Activated T-helper 1 cell treated with anti-CD3 and anti-CD28 coated beads, Interleukin-12 subunit alpha, Interleukin-12 subunit beta, Interleukin-2, Interleukin-4 antibody, amounts not matched to agents 30 ng/mL and 10 ng/mL and 1 ng/mL, durations not matched to agents 14 hours and 24 hours and 36 hours (primary cell): ENCODE measurements at regions of chr2 and their contacts with region 1.

Region 1: GRCh38 chr2:220687231-220687843 is 884.8 kb downstream of the EPHA4 start:
- DNase-seq: peak; percentile 30
- H3K4me3 Mint-ChIP-seq: no peak overlapping the region
- H3K27ac Mint-ChIP-seq: no peak overlapping the region
- H3K4me1 Mint-ChIP-seq: no peaks in the 10 kb centered on the region
- H3K27me3 Mint-ChIP-seq: peaks cover 5% of the 10 kb centered on the region

Region 2: GRCh38 chr2:219368690-219369195 is 1318.6 kb before region 1 on chr2:
- intact Hi-C with region 1: no loop called
- DNase-seq: no peak
- H3K4me3 Mint-ChIP-seq: no peak overlapping the region
- H3K27ac Mint-ChIP-seq: no peak overlapping the region
- H3K4me1 Mint-ChIP-seq: no peaks in the 10 kb centered on the region
- H3K27me3 Mint-ChIP-seq: no peaks in the 10 kb centered on the region

Region 3: GRCh38 chr2:220717283-220717682 is 29.9 kb after region 1 on chr2:
- intact Hi-C with region 1: no loop called
- DNase-seq: no peak
- H3K4me3 Mint-ChIP-seq: no peak overlapping the region
- H3K27ac Mint-ChIP-seq: no peak overlapping the region
- H3K4me1 Mint-ChIP-seq: no peaks in the 10 kb centered on the region
- H3K27me3 Mint-ChIP-seq: peaks cover 2% of the 10 kb centered on the region

Region 4: GRCh38 chr2:220959391-220959802 is 272.1 kb after region 1 on chr2:
- intact Hi-C with region 1: no loop called
- DNase-seq: no peak
- H3K4me3 Mint-ChIP-seq: no peak overlapping the region
- H3K27ac Mint-ChIP-seq: no peak overlapping the region
- H3K4me1 Mint-ChIP-seq: no peaks in the 10 kb centered on the region
- H3K27me3 Mint-ChIP-seq: no peaks in the 10 kb centered on the region

Region 5: GRCh38 chr2:221443645-221444044 is 756.3 kb after region 1 on chr2:
- intact Hi-C with region 1: loop called (anchors 2 kb)
- DNase-seq: no peak
- H3K4me3 Mint-ChIP-seq: no peak overlapping the region
- H3K27ac Mint-ChIP-seq: no peak overlapping the region
- H3K4me1 Mint-ChIP-seq: no peaks in the 10 kb centered on the region
- H3K27me3 Mint-ChIP-seq: no peaks in the 10 kb centered on the region

Region 6: DNA sequence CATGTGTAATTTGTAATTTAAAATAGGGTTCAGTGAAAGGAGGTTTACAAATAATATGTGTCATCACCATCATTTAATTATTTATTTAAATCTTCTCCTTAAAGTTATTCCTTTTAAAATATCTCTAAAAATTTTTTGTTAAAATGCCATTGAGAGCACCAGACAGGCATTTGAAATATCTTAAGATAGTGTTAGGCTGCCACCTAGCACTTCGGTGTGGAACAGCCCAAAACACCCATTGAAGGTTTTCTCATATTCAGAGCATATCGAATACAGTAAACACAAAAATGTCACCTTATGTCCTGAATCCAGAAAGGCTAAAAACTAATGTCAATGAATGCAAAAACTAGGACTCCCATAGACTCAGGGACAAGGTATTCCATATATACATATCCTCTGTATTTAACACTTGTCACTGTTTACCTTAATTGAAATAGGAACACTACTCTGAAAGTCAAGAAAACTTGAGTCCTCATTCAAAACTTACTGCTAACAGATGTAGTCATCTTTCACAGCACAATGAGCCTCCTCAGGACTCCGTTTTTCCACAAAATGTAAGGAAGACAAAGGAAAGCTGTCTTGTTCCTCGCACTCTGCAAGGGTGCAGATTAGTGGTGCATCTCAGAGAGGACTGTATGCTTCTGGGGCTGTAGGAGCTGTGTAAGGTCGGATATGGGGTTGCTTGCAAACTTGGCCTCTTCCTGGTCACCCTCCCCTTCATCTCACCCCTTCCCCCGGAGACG is 1281.9 kb after region 1 on chr2:
- intact Hi-C with region 1: loop called (anchors 10 kb)
- DNase-seq: no peak
- H3K4me3 Mint-ChIP-seq: no peak overlapping the region
- H3K27ac Mint-ChIP-seq: no peak overlapping the region
- H3K4me1 Mint-ChIP-seq: no peaks in the 10 kb centered on the region
- H3K27me3 Mint-ChIP-seq: peaks cover 2% of the 10 kb centered on the region